HEK293 (cell line): ENCODE measurements at regions of chr14 and their contacts with region 1.

Region 1: GRCh38 chr14:94136575-94137331 is 7.3 kb upstream of the IFI27L2 start:
- H3K4me3 ChIP-seq: no peak overlapping the region
- H3K27ac ChIP-seq: no peak overlapping the region
- H3K4me1 ChIP-seq: no peaks in the 10 kb centered on the region
- CTCF ChIP-seq: peak; percentile 89

Region 2: GRCh38 chr14:94036313-94037050 is 100.3 kb before region 1 on chr14:
- CTCF ChIA-PET with region 1: interaction called, 46 read pairs
- POLR2A ChIA-PET with region 1: interaction called, 5 read pairs
- H3K4me3 ChIP-seq: no peak overlapping the region
- H3K27ac ChIP-seq: no peak overlapping the region
- H3K4me1 ChIP-seq: no peaks in the 10 kb centered on the region
- CTCF ChIP-seq: peak; percentile 69

Region 3: DNA sequence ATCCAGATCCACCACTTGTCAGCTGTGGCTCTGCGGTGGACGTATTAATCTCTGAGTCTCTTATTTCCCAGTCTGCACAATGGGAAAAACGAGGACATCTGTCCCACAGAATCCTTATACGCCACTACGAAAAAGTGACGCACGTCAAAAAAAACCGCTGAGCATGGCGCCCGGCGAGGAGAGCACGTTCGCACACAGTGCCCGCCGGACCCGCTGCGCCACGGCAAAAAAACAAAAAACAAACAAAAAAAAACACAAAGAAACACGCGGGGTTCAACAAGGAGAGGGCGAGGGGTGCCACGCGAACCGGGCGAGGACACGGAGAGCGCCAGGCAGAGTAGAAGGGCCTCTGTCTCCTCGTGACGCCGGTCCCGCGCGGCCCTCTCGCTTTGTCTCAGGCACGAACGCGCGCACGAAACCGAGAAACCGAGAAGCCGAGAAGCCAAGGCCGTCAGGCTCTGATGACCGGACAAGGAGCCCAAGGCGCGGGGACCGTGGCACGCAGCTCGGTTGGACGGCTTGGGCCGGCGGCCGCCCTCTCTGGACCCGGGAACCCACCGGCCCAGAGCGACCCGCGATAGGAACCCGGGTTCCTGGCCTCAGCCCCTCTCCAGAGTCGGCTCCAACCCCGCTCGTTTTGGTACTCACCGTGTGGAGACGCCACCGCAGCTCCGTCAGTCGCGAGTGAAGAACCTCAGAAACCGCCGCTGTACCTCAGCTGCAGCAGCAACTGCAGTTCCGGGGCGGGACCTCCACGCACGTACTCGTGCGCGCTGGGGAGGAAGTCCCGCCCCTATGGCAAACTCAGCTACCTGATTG is 56.1 kb before region 1 on chr14 and contains the start of gene DDX24:
- CTCF ChIA-PET with region 1: interaction called, 14 read pairs
- POLR2A ChIA-PET with region 1: no interaction called
- H3K4me3 ChIP-seq: peak within 1 kb of the TSS; percentile 91
- H3K27ac ChIP-seq: peak within 1 kb of the TSS; percentile 82; the same call in 1 of the 2 replicates
- H3K4me1 ChIP-seq: peaks cover 4% of the 10 kb centered on the region; the same call in 1 of the 2 replicates
- CTCF ChIP-seq: no peak; the same call in 1 of the 2 replicates

Region 4: GRCh38 chr14:94153750-94154342 is 17.1 kb after region 1 on chr14:
- CTCF ChIA-PET with region 1: interaction called, 13 read pairs
- POLR2A ChIA-PET with region 1: no interaction called
- H3K4me3 ChIP-seq: no peak overlapping the region
- H3K27ac ChIP-seq: no peak overlapping the region
- H3K4me1 ChIP-seq: no peaks in the 10 kb centered on the region
- CTCF ChIP-seq: no peak

Region 5: DNA sequence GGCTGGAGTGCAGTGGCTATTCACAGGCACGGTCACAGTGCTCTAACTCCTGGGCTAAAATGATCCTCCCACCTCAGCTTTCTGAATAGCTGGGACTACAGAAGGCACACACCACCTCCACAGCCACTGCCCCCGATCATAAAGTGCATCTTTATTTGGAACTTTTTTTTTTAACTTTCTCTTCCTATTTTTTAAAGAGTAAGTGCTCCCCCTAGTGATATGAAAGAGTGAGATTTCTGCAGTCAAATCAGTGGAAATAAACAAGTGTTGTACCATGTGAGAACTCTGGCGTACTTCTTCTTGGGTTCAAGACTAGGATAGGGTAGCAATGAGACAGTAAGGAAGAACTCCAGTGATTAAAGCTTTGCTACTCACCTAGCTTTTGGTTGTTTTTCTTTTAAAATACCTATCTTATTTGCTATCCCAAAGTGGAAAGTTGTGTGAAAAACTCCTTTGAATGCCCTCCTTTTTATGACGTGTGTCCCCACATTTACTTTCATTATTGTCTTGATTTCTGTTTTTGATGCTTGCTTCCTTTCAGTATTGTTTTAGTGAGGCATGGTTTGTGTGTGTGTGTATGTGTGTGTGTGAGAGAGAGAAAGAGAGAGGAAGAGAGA is 44.0 kb after region 1 on chr14:
- CTCF ChIA-PET with region 1: interaction called, 62 read pairs
- POLR2A ChIA-PET with region 1: no interaction called
- H3K4me3 ChIP-seq: no peak overlapping the region
- H3K27ac ChIP-seq: no peak overlapping the region
- H3K4me1 ChIP-seq: no peaks in the 10 kb centered on the region
- CTCF ChIP-seq: peak; percentile 48; the same call in 1 of the 2 replicates

Region 6: GRCh38 chr14:94237983-94238382 is 101.2 kb after region 1 on chr14:
- CTCF ChIA-PET with region 1: no interaction called
- POLR2A ChIA-PET with region 1: no interaction called
- H3K4me3 ChIP-seq: no peak overlapping the region
- H3K27ac ChIP-seq: no peak overlapping the region
- H3K4me1 ChIP-seq: no peaks in the 10 kb centered on the region
- CTCF ChIP-seq: no peak

Region 7: DNA sequence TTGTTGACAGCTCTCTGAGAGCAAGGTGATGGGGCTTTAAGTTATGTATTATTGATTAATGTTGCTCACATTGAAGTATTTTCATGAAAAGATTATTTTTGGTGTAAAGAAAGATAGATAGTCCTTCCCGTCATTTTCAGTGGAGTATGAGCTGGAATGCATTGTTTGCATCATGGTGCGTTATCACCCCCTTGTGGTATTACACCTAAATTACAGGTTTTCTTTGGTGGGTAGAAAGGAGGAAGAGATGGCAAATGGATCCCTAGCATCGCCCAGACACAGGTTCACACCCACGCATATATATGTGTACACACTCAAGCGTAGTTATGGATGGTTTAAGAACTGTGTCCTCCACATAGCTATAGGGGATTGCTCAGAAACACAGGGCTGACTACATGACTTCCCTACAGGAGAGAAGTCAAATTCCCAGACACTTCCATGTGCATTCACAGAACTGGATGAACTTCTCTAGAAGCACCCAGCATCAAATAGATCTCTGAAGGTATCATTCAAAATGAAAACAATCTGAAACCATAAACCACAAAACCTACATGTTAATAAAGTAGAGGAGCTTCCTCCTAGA is 170.7 kb after region 1 on chr14:
- CTCF ChIA-PET with region 1: no interaction called
- POLR2A ChIA-PET with region 1: no interaction called
- H3K4me3 ChIP-seq: no peak overlapping the region
- H3K27ac ChIP-seq: no peak overlapping the region
- H3K4me1 ChIP-seq: no peaks in the 10 kb centered on the region
- CTCF ChIP-seq: no peak